Head of caudate nucleus (tissue), 42 donors: ENCODE measurements at regions of chr19 and their contacts with region 1.

Region 1: GRCh38 chr19:51986309-51987291 is at the start of gene ZNF350:
- DNase-seq: peak; percentile 90 to 99 (median 97)

Region 2: GRCh38 chr19:51926784-51927742 is 59.5 kb before region 1 on chr19 and contains the start of gene ZNF613:
- intact Hi-C with region 1: loop called (anchors 2 kb)
- DNase-seq: peak; percentile 86 to 97 (median 92)

Region 3: DNA sequence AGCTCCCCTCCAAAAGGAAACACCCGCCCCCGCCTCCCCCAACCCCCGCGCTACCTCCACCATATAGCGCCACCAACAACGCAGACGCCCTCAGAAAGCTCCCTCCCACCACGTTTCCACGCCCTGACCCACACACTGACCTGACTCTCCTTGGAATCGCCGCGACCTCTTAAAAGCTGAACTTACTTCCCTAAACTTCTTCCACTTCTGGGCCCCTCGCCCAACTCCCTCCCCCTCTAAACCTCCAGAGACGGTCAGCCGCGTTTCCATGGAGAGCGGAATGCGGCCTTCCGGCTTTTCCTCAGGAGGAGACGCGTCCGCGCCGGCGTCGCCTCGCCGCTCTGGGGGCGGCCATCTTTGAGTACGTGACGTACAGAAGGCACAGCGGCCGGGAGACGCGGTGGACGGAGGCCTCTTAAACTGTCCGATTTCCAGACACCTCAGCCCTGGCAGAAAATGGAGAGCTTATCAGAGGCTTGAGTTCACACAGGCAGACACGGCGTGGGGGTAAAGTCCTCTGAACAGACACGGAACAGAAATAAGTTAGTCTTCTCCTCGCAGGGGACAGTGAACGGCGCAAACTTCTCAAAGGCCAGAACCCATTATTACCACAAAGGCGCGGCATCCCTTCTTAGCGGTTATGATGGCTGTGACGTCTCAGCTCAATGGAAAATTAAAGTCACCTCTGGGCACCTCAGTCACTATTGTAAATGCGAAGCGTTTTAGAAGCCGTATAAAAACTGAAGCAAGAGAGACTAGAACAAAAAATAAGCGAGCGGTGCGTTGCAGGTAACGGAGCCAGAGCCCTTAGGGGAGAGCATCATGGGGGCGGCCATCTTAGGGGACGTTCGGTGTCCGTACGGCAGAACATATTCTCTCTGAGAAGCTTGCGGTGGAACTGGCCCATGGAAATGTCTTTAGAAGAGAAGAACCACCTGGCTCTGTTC is 62.2 kb after region 1 on chr19 and contains the start of gene ZNF432:
- intact Hi-C with region 1: loop called (anchors 10 kb)
- DNase-seq: peak; percentile 85 to 97 (median 93)